ENCODE measurements at regions of chr19 and their contacts with region 1.

Region 1: DNA sequence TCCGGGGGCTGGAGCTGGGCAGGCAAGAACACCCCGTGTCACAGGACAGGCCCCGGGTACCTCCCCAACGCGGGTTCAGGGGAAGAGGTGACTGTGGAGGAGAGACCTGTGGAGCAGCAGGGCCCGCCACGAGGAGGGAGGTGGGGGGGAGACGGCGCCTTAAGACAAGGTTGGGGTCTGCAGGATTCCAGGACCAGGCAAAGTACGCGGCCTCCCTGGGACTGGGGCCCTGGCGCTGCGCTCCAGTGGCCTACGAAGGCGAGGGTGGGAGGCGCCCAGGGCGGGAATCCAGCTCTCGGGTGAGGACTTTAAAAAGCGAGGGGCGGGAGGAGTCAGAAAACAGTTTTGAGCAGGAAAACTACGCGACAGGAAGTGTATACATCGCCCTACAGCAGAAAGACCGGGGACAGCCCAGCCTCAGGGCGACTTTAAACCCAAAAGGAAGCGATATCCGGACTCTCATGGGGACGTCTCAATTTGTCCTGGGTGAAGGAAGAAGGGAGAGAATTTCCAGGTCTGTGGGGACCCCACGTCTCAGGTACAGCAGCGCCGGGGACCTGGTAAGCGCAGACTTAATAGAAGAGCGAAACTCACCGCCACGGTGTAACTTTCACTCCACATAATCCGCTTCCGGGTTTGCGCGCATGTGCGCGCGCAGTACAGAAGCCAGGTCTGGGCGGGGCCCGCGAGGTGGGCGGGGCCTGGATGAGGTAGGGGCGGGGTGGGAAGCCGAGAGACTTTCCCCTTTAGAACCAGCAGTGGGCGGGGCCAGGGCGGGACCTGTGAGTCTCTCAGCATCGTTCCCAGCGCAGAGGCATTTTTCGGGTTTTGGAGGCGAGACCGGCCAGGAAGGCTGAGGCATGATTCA is at the start of gene ZNF83:
- DNase-seq: peak; percentile 81 to 97 (median 92)
- ATAC-seq: peak; percentile 99
- H3K4me3 ChIP-seq: peak within 1 kb of the TSS; percentile 86
- H3K4me3 Mint-ChIP-seq: peak within 1 kb of the TSS; percentile 92 to 98 (median 95)
- H3K27ac ChIP-seq: peak within 1 kb of the TSS; percentile 99
- H3K27ac Mint-ChIP-seq: peak within 1 kb of the TSS; percentile 94 to 98 (median 97)
- H3K4me1 ChIP-seq: peaks cover 7 to 8% of the 10 kb centered on the region in 2 donors
- H3K4me1 Mint-ChIP-seq: peaks cover 11 to 27% (median 20%) of the 10 kb centered on the region in 7 donors
- H3K27me3 ChIP-seq: no peaks in the 10 kb centered on the region
- H3K27me3 Mint-ChIP-seq: no peaks in the 10 kb centered on the region
- total RNA-seq, gene ZNF83: 49.7 to 113 (median 70.5) TPM

Region 2: GRCh38 chr19:52296773-52297600 is 341.0 kb before region 1 on chr19 and contains the start of gene ZNF480:
- CTCF ChIA-PET with region 1: no interaction called
- POLR2A ChIA-PET with region 1: no interaction called
- intact Hi-C with region 1: loop called in 1 of 2 experiments (anchors 10 kb)
- DNase-seq: peak; percentile 67 to 91 (median 87)
- ATAC-seq: peak; percentile 89
- H3K4me3 ChIP-seq: peak within 1 kb of the TSS; percentile 85
- H3K4me3 Mint-ChIP-seq: peak within 1 kb of the TSS; percentile 89 to 99 (median 98)
- H3K27ac ChIP-seq: peak within 1 kb of the TSS; percentile 97
- H3K27ac Mint-ChIP-seq: peak within 1 kb of the TSS; percentile 95 to 99 (median 98)
- H3K4me1 ChIP-seq: peaks cover 4 to 5% of the 10 kb centered on the region in 2 donors
- H3K4me1 Mint-ChIP-seq: peaks cover 15 to 32% (median 19%) of the 10 kb centered on the region in 7 donors
- H3K27me3 ChIP-seq: no peaks in the 10 kb centered on the region
- H3K27me3 Mint-ChIP-seq: peaks cover 0 to 3% (median 0%) of the 10 kb centered on the region in 5 donors
- total RNA-seq, gene ZNF480: 8.5 to 28.9 (median 13.3) TPM

Region 3: GRCh38 chr19:52527134-52527955 is 110.6 kb before region 1 on chr19 and contains the start of gene ZNF808:
- CTCF ChIA-PET with region 1: no interaction called
- POLR2A ChIA-PET with region 1: interaction called, 3 read pairs
- intact Hi-C with region 1: loop called (anchors 1 kb)
- DNase-seq: peak; percentile 79 to 95 (median 90)
- ATAC-seq: peak; percentile 99
- H3K4me3 ChIP-seq: peak within 1 kb of the TSS; percentile 99
- H3K4me3 Mint-ChIP-seq: peak within 1 kb of the TSS; percentile 91 to 100 (median 98)
- H3K27ac ChIP-seq: peak within 1 kb of the TSS; percentile 91
- H3K27ac Mint-ChIP-seq: peak within 1 kb of the TSS; percentile 84 to 99 (median 98)
- H3K4me1 ChIP-seq: peaks cover 9 to 12% of the 10 kb centered on the region in 2 donors
- H3K4me1 Mint-ChIP-seq: peaks cover 18 to 34% (median 25%) of the 10 kb centered on the region in 7 donors
- H3K27me3 ChIP-seq: no peaks in the 10 kb centered on the region
- H3K27me3 Mint-ChIP-seq: no peaks in the 10 kb centered on the region
- total RNA-seq, gene ZNF808: 17.7 to 52.4 (median 33.7) TPM

Region 4: DNA sequence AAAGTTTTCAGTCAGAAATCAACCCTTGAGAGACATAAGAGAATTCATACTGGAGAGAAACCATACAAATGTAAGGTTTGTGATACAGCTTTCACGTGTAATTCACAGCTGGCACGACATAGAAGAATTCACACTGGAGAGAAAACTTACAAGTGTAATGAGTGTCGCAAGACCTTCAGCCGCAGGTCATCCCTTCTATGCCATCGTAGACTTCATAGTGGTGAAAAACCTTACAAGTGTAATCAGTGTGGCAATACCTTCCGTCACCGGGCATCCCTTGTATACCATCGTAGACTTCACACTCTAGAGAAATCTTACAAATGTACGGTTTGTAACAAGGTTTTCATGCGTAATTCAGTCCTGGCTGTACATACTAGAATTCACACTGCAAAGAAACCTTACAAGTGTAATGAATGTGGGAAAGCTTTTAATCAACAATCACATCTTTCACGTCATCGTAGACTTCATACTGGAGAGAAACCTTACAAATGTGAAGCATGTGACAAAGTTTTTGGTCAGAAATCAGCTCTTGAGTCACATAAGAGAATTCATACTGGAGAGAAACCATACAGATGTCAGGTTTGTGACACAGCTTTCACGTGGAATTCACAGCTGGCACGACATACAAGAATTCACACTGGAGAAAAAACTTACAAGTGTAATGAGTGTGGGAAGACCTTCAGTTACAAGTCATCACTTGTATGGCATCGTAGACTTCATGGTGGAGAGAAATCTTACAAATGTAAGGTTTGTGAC is 83.6 kb before region 1 on chr19:
- CTCF ChIA-PET with region 1: no interaction called
- POLR2A ChIA-PET with region 1: no interaction called
- intact Hi-C with region 1: no loop called
- DNase-seq: no peak
- ATAC-seq: no peak
- H3K4me3 ChIP-seq: peak overlapping the region; percentile 2
- H3K4me3 Mint-ChIP-seq: peak overlapping the region in 1 of 10 donors; percentile 23
- H3K27ac ChIP-seq: no peak overlapping the region
- H3K27ac Mint-ChIP-seq: no peak overlapping the region
- H3K4me1 ChIP-seq: no peaks in the 10 kb centered on the region
- H3K4me1 Mint-ChIP-seq: peaks cover 0 to 4% (median 0%) of the 10 kb centered on the region in 7 donors
- H3K27me3 ChIP-seq: no peaks in the 10 kb centered on the region
- H3K27me3 Mint-ChIP-seq: no peaks in the 10 kb centered on the region

Region 5: GRCh38 chr19:52570000-52570861 is 67.7 kb before region 1 on chr19 and contains the start of gene ZNF701:
- CTCF ChIA-PET with region 1: no interaction called
- POLR2A ChIA-PET with region 1: no interaction called
- intact Hi-C with region 1: loop called (anchors 1 kb)
- DNase-seq: peak; percentile 92 to 99 (median 96)
- ATAC-seq: peak; percentile 100
- H3K4me3 ChIP-seq: peak within 1 kb of the TSS; percentile 78
- H3K4me3 Mint-ChIP-seq: peak within 1 kb of the TSS; percentile 88 to 99 (median 94)
- H3K27ac ChIP-seq: peak within 1 kb of the TSS; percentile 78
- H3K27ac Mint-ChIP-seq: peak within 1 kb of the TSS; percentile 92 to 98 (median 95)
- H3K4me1 ChIP-seq: peaks cover 10 to 13% of the 10 kb centered on the region in 2 donors
- H3K4me1 Mint-ChIP-seq: peaks cover 9 to 42% (median 37%) of the 10 kb centered on the region in 7 donors
- H3K27me3 ChIP-seq: no peaks in the 10 kb centered on the region
- H3K27me3 Mint-ChIP-seq: no peaks in the 10 kb centered on the region
- total RNA-seq, gene ZNF701: 11.7 to 43.3 (median 28.3) TPM

Region 6: GRCh38 chr19:52690369-52691214 is 52.6 kb after region 1 on chr19:
- CTCF ChIA-PET with region 1: no interaction called
- POLR2A ChIA-PET with region 1: interaction called, 3 read pairs
- intact Hi-C with region 1: loop called (anchors 1 kb)
- DNase-seq: peak; percentile 81 to 91 (median 87)
- ATAC-seq: peak; percentile 99
- H3K4me3 ChIP-seq: peak overlapping the region; percentile 80
- H3K4me3 Mint-ChIP-seq: peak overlapping the region; percentile 92 to 99 (median 96)
- H3K27ac ChIP-seq: peak overlapping the region; percentile 85
- H3K27ac Mint-ChIP-seq: peak overlapping the region; percentile 89 to 97 (median 94)
- H3K4me1 ChIP-seq: peaks cover 6 to 9% of the 10 kb centered on the region in 2 donors
- H3K4me1 Mint-ChIP-seq: peaks cover 18 to 33% (median 30%) of the 10 kb centered on the region in 7 donors
- H3K27me3 ChIP-seq: no peaks in the 10 kb centered on the region
- H3K27me3 Mint-ChIP-seq: no peaks in the 10 kb centered on the region

Region 7: GRCh38 chr19:52853880-52854279 is 215.9 kb after region 1 on chr19:
- CTCF ChIA-PET with region 1: no interaction called
- POLR2A ChIA-PET with region 1: no interaction called
- intact Hi-C with region 1: loop called in 1 of 2 experiments (anchors 1 kb)
- DNase-seq: no peak
- ATAC-seq: no peak
- H3K4me3 ChIP-seq: no peak overlapping the region
- H3K4me3 Mint-ChIP-seq: peak overlapping the region in 1 of 10 donors; percentile 53
- H3K27ac ChIP-seq: no peak overlapping the region
- H3K27ac Mint-ChIP-seq: no peak overlapping the region
- H3K4me1 ChIP-seq: no peaks in the 10 kb centered on the region
- H3K4me1 Mint-ChIP-seq: peaks cover 15 to 39% (median 32%) of the 10 kb centered on the region in 7 donors
- H3K27me3 ChIP-seq: no peaks in the 10 kb centered on the region
- H3K27me3 Mint-ChIP-seq: no peaks in the 10 kb centered on the region

Region 8: DNA sequence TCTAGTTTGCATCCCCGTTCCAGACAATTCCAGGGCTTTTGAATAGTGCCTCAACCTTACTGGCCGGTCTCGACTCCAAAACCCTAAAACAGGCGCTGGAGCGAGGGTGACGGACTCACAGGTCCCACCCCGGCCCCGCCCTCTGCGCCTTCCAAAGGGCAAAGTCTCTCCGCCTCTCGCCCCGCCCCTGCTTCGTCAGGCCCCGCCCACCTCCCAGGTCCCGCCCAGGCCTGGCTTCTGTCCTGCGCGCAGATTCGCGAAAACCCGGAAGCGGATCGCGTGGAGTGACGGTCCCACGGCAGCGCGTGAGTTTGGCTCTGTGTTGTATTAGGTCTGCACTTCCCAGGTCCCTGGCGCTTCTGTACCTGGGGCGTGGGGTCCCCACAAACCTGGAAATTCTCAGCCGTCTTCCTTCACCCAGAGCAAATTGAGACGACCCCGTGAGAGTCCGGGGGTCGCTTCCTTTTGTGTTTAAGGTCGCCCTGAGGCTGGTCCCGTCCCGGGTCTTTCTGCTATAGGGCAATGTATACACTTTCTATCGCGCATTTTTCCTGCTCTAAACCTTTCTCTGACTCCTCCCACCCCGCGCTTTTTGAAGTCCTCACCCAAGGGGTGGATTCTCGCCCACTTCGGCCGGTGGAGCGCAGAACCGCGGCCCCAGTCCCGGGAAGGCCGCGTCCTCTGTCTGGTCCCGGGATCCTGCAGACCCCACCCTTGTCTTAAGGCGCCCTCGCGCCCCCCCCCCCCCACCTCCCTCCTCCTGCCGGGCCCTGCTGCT is 829.7 kb after region 1 on chr19 and contains the start of gene ZNF813:
- CTCF ChIA-PET with region 1: no interaction called
- POLR2A ChIA-PET with region 1: no interaction called
- intact Hi-C with region 1: loop called in 1 of 2 experiments (anchors 1 kb)
- DNase-seq: peak; percentile 81 to 95 (median 92)
- ATAC-seq: peak; percentile 100
- H3K4me3 ChIP-seq: peak within 1 kb of the TSS; percentile 74
- H3K4me3 Mint-ChIP-seq: peak within 1 kb of the TSS; percentile 88 to 96 (median 94)
- H3K27ac ChIP-seq: peak within 1 kb of the TSS; percentile 73
- H3K27ac Mint-ChIP-seq: peak within 1 kb of the TSS; percentile 76 to 96 (median 90)
- H3K4me1 ChIP-seq: no peaks in the 10 kb centered on the region
- H3K4me1 Mint-ChIP-seq: peaks cover 20 to 45% (median 31%) of the 10 kb centered on the region in 7 donors
- H3K27me3 ChIP-seq: no peaks in the 10 kb centered on the region
- H3K27me3 Mint-ChIP-seq: peaks cover 0 to 24% (median 12%) of the 10 kb centered on the region in 5 donors
- total RNA-seq, gene ZNF813: 2.5 to 11.2 (median 4.6) TPM

Measured in naive thymus-derived CD4-positive, alpha-beta T cell (primary cell).